ENCODE measurements at regions of chr2 and their contacts with region 1.

Region 1: DNA sequence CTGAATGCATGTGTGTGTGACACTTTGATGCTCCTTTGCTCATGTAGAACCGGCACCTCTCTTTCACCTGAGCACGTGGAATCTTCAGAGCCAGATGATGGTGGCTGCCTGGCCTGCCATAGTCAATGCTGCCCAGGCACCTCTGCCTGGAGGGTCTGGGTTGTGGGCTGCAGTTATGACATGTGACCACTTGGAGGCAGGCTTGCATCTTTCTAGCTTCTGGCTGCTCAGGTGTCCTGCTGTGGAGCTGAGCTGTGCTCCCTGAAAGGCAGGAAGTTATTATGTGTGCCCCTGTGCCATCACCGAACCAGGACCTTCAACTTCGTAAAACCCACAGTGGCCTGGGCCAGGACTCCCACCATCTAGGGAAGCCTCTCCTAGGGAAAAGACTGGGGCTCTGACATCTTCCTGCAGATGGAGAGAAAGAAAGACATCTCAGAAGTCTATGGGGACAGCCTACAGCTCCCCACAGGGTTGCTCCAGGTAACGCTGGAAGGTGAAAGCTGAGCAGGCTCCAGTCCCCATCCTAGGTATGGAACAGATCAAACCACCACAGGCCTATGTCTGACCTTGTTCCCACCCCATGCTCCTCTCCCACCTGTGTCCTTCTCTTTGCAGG is 30.2 kb downstream of the PSD4 start:
- DNase-seq: peak; percentile 85
- ATAC-seq: peak; percentile 86
- H3K4me3 Mint-ChIP-seq: no peak overlapping the region
- H3K27ac Mint-ChIP-seq: peak overlapping the region; percentile 77
- H3K4me1 Mint-ChIP-seq: peaks cover 16% of the 10 kb centered on the region
- H3K27me3 Mint-ChIP-seq: no peaks in the 10 kb centered on the region
- CTCF ChIP-seq: peak; percentile 78

Region 2: DNA sequence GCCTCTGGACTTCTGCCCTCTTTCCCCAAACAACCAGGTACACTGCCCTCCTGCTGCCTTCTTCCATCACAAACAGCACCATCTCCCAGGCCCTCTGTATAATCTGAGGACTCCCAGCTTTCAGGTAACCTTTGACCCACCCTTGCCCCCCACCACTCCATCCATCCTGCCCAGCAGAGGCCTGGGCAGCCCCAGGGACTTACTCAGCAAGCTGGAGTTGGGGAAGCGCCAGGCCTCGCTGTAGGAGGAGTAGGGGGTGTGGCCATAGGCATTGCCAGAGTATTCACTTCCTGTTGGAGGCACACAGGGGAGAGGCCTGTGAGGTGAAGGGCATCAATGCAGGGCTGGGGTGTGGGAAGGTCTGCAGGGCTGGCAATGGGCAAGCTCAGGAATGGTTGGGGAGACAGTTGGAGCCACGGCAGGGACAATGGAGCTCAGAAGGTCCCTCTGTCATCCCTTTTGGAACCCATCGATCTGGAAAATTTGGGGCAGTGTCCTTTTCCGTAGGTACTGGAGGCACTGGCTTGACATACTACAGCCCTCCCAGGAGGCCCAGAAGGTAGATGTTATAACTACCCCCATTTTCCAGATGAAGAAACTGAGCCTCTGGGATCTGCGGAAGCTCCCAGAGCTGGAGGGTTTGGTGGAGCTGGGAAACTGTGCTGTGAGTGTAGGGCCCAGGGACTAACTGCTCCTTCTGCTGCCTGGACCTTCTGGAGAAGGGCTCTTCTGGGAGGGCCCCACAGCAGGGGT is 16.1 kb after region 1 on chr2:
- CTCF ChIA-PET with region 1: interaction called, 25 read pairs
- POLR2A ChIA-PET with region 1: interaction called, 14 read pairs
- intact Hi-C with region 1: no loop called
- DNase-seq: no peak
- ATAC-seq: peak; percentile 60
- H3K4me3 Mint-ChIP-seq: no peak overlapping the region
- H3K27ac Mint-ChIP-seq: no peak overlapping the region
- H3K4me1 Mint-ChIP-seq: peaks cover 19% of the 10 kb centered on the region
- H3K27me3 Mint-ChIP-seq: no peaks in the 10 kb centered on the region
- CTCF ChIP-seq: no peak

Region 3: DNA sequence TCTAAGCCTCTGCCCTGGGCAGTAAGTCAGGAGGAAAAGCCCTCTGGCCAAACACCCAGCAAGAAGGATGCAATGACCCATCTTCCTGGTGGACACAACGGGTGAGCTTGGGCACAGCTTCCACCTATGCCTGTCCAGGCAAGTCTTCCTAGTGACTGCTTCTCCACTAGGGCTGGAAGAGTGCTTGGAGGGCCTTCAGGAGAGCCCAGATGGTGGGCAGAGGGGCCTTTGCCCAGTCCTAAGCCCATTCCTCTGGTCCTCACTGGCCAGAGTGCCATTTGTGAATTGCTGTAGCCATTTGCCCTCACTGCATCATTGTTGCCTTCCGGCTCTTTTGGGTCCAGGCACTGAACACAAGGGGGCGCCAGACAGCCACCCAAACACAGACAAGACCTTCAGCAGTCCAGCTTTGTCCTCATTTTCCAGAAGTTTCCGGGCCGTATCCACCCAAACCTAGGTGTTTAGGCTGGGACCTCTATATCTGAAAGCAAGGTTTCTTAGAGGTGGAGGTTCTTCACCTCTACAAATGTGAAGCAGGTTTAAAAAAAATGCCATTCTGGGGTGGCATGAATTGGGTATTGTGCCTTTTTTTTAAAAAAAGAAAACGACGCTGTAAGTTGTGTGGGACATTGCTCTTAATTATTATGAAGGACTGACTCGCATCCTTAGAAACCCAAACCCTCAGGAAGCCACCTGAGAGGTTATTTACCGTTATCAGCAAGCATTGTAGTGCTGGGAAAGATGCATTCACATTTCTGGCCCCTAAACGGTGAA is 45.2 kb after region 1 on chr2:
- CTCF ChIA-PET with region 1: interaction called, 11 read pairs
- POLR2A ChIA-PET with region 1: interaction called, 3 read pairs
- intact Hi-C with region 1: no loop called
- DNase-seq: peak; percentile 86
- ATAC-seq: peak; percentile 46
- H3K4me3 Mint-ChIP-seq: no peak overlapping the region
- H3K27ac Mint-ChIP-seq: peak overlapping the region; percentile 73
- H3K4me1 Mint-ChIP-seq: peaks cover 45% of the 10 kb centered on the region
- H3K27me3 Mint-ChIP-seq: no peaks in the 10 kb centered on the region
- CTCF ChIP-seq: peak; percentile 90

Region 4: DNA sequence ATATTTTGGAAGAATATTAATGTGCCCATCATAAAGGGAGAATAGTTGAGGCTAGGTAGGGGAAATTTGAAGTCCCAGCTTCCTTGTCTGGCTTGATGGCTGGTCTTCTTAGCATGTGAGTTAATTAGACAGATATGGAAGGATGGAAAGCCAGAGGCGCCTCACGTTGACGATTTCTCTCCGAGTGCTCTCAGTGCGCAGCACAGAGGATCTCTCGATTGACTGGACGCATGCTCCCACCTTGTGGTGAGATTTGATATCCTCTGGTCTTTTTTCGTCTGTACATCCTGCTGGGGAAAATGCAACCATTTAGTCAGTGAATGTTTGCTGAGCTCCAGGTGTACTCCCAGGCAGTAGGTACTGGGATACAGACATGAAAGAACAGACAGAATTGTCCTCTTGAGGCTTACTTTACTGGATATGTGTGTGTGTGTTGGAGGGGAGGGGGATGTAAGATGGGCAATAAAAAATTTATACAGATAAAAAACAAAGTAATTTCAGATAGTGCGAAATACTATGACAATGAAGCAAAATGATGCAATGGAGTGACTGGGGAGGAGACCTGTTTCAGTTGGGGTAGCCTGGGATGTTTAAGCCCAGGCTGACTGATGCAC is 166.6 kb after region 1 on chr2:
- CTCF ChIA-PET with region 1: interaction called, 13 read pairs
- POLR2A ChIA-PET with region 1: no interaction called
- intact Hi-C with region 1: no loop called
- DNase-seq: peak; percentile 79
- ATAC-seq: peak; percentile 97
- H3K4me3 Mint-ChIP-seq: no peak overlapping the region
- H3K27ac Mint-ChIP-seq: no peak overlapping the region
- H3K4me1 Mint-ChIP-seq: peaks cover 5% of the 10 kb centered on the region
- H3K27me3 Mint-ChIP-seq: peaks cover 4% of the 10 kb centered on the region
- CTCF ChIP-seq: peak; percentile 73

Region 5: DNA sequence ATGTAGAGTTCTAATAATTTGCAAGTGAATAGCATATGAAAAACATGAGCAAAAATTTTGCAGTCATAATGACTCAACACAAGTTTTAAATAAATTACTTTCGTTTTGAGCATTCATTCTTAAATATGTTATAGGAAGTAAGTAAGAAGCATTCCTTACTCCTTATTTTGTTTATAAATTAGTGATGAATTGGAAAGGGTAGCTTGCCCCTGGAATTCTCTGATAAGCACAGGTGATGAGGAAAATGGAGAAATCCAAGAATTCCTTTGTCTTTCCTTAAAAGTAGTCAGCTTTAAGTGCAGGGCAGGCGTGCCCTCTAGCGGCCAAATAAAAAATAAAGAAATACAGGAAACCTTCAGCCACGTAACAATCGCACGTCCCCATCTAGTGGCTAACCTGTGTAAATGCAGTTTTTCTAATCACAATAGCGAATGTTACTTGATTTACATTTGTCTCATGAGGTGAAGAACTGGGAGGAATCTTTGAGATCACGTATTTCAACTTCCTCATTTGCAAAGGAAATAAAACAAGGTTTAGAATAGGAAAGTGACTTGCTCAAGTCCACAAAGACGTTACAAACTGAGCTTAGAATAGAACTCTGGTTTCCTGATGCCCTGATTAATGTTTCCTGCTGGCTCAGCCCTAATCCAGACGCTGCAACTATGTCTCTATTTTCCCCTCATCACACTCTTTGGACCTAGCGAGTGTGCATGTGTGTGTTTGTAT is 186.3 kb after region 1 on chr2:
- CTCF ChIA-PET with region 1: interaction called, 19 read pairs
- POLR2A ChIA-PET with region 1: interaction called, 4 read pairs
- intact Hi-C with region 1: no loop called
- DNase-seq: peak; percentile 66
- ATAC-seq: peak; percentile 98
- H3K4me3 Mint-ChIP-seq: peak overlapping the region; percentile 55
- H3K27ac Mint-ChIP-seq: peak overlapping the region; percentile 55
- H3K4me1 Mint-ChIP-seq: peaks cover 8% of the 10 kb centered on the region
- H3K27me3 Mint-ChIP-seq: peaks cover 7% of the 10 kb centered on the region
- CTCF ChIP-seq: peak; percentile 96